ENCODE measurements at regions of chr19 and their contacts with region 1.

Region 1: DNA sequence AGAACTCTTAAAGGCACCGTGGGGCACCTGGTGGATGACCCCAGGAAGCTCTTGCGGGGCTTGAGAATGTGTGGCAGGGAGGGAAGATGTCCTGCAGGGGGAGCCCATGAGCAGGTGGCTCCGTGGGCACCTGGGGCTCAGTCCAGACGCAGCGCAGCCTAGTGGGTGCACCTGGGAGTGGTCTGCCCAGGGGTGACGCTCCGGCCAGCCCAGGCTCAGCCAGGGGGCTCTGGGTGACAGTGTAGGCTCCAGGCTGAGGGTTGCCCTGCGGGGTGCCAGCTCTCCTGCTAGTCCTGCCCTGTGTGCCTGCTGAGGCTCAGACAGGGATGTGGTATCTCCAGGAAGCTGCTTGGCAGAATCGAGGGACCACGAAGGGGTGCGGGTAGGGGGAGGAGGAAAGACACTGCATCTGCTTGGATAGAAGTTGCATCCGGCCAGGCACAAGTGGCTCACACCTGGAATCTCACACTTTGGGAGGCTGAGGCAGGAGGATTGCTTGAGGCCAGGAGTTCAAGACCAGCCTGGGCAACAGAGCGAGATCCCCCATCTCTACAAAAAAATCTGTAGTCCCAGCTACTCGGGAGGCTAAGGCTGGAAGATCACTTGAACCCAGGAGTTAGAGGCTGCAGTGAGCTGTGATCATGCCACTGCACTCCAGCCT is 15.0 kb upstream of the PGLS start:
- DNase-seq: peak; percentile 84 to 95
- H3K4me3 ChIP-seq: peak overlapping the region in 1 of 4 experiments; percentile 54; a peak in 1 of 8 replicates
- H3K27ac ChIP-seq: no peak overlapping the region
- H3K4me1 ChIP-seq: peaks cover 0 to 8% (median 4%) of the 10 kb centered on the region in 4 experiments; a peak in 3 of 7 replicates
- H3K27me3 ChIP-seq: no peaks in the 10 kb centered on the region
- CTCF ChIP-seq: peak; percentile 99 to 100 (median 100)
- EP300 ChIP-seq: no peak
- POLR2A ChIP-seq: no peak
- RAD21 ChIP-seq: peak; percentile 61 to 70

Region 2: GRCh38 chr19:17448131-17448967 is 48.1 kb before region 1 on chr19 and contains the start of gene TMEM221:
- CTCF ChIA-PET with region 1: interaction called, 13 read pairs
- POLR2A ChIA-PET with region 1: interaction called, 4 read pairs
- DNase-seq: peak in 1 of 2 experiments; percentile 89
- H3K4me3 ChIP-seq: peak within 1 kb of the TSS; percentile 40 to 94 (median 48)
- H3K27ac ChIP-seq: no peak within 1 kb of the TSS
- H3K4me1 ChIP-seq: peaks cover 0 to 2% (median under 1%) of the 10 kb centered on the region in 4 experiments; a peak in 1 of 7 replicates
- H3K27me3 ChIP-seq: peaks cover 0 to 16% (median 10%) of the 10 kb centered on the region in 4 experiments; a peak in 6 of 7 replicates
- CTCF ChIP-seq: peak; percentile 39 to 60 (median 54)
- EP300 ChIP-seq: no peak
- POLR2A ChIP-seq: peak in 1 of 2 experiments; percentile 57; a peak in 1 of 3 replicates
- RAD21 ChIP-seq: peak in 1 of 2 experiments; percentile 19; a peak in 1 of 4 replicates
- total RNA-seq, gene TMEM221: 1.4 and 1.6 TPM in 2 replicates

Region 3: DNA sequence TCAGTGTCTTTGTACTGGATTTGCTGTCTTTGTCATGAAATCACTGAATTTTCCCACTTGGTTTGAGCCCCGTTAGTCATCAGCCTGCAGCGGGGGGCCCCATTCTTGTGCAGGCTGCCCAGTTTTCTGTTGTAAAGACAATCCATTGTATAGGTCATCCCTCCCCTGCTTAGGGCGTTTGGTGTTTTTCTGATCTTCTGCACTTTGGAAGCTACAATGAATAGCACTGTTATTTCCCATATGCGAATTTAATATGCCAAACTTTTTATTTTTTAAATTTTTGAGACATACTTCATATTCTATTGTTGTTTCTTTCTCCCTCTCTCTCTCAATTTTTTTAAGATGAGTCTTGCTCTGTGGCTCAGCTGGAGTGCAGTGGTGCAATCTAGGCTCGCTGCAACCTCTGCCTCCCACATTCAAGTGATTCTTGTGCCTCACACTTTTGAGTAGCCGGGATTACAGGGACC is 17.1 kb before region 1 on chr19:
- CTCF ChIA-PET with region 1: interaction called, 13 read pairs
- POLR2A ChIA-PET with region 1: interaction called, 3 read pairs
- DNase-seq: no peak
- H3K4me3 ChIP-seq: no peak overlapping the region
- H3K27ac ChIP-seq: no peak overlapping the region
- H3K4me1 ChIP-seq: peaks cover 0 to 6% (median 0%) of the 10 kb centered on the region in 4 experiments; a peak in 4 of 7 replicates
- H3K27me3 ChIP-seq: no peaks in the 10 kb centered on the region
- CTCF ChIP-seq: no peak
- EP300 ChIP-seq: no peak
- POLR2A ChIP-seq: no peak
- RAD21 ChIP-seq: no peak

Region 4: DNA sequence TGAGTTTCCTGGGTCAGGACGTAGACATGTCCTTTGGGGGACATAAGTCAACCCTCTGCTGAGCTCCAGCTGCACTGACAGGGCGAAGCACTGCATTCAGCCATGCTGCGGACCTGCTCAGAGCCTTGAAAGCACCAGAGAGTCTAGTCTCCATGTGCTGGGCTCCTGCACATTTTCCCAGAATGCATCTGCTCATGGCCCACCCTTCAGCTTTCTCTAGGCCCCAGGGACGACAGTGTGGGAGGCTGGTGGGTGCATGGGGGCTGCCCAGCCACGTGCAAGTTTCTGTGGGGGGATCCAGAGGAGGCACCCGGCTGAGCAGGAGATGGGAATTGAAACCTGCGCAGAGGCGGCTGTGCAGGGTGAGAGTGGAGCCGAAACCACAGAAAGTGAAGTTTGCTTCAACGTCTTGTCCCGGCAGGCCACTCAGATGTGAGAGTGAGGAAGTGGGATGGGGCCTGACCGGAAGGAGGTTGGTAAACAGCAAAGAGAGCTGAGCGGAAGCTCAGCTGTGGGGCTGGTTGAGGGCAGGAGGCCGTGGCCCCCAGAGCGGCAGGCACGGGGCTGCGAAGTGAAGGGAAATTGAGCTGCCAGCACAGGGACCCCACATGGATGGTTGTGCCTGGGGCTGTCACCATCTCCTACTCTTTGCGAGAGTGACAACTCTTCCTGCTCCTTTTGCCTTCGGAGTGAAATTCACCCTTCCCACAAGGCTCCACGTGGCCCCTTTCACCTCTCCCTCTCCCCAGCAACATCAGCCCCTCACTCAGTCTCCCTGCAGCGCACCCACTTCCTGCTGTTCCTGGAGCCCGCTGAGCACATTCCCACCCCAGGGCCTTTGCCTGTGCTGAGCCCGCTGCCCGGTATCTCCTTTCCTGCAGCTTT is 26.8 kb after region 1 on chr19:
- CTCF ChIA-PET with region 1: interaction called, 15 read pairs
- POLR2A ChIA-PET with region 1: no interaction called
- DNase-seq: no peak
- H3K4me3 ChIP-seq: no peak overlapping the region
- H3K27ac ChIP-seq: no peak overlapping the region
- H3K4me1 ChIP-seq: no peaks in the 10 kb centered on the region; a peak in 1 of 7 replicates
- H3K27me3 ChIP-seq: no peaks in the 10 kb centered on the region
- CTCF ChIP-seq: no peak
- EP300 ChIP-seq: no peak
- POLR2A ChIP-seq: no peak
- RAD21 ChIP-seq: no peak

Region 5: GRCh38 chr19:17555929-17556813 is 59.7 kb after region 1 on chr19:
- CTCF ChIA-PET with region 1: interaction called, 16 read pairs
- POLR2A ChIA-PET with region 1: interaction called, 3 read pairs
- DNase-seq: peak in 1 of 2 experiments; percentile 67
- H3K4me3 ChIP-seq: peak overlapping the region; percentile 65 to 84 (median 66)
- H3K27ac ChIP-seq: no peak overlapping the region
- H3K4me1 ChIP-seq: peaks cover 0 to 7% (median 3%) of the 10 kb centered on the region in 4 experiments; a peak in 5 of 7 replicates
- H3K27me3 ChIP-seq: peaks cover 0 to 7% (median 2%) of the 10 kb centered on the region in 4 experiments; a peak in 2 of 7 replicates
- CTCF ChIP-seq: 0 out of 4 replicates have a peak, but pooled peaks of 1 of the 3 experiments have one; percentile 4
- EP300 ChIP-seq: no peak
- POLR2A ChIP-seq: no peak
- RAD21 ChIP-seq: peak in 1 of 2 experiments; percentile 27; a peak in 1 of 4 replicates

Region 6: GRCh38 chr19:17579661-17580244 is 83.3 kb after region 1 on chr19:
- CTCF ChIA-PET with region 1: interaction called, 38 read pairs
- POLR2A ChIA-PET with region 1: no interaction called
- DNase-seq: peak; percentile 87 to 95
- H3K4me3 ChIP-seq: peak overlapping the region; percentile 23 to 46 (median 36); a peak in 5 of 8 replicates
- H3K27ac ChIP-seq: 0 out of 2 replicates have a peak overlapping the region, but pooled peaks have one; percentile 13
- H3K4me1 ChIP-seq: peaks cover 0 to 18% (median 14%) of the 10 kb centered on the region in 4 experiments; a peak in 6 of 7 replicates
- H3K27me3 ChIP-seq: no peaks in the 10 kb centered on the region
- CTCF ChIP-seq: no peak
- EP300 ChIP-seq: no peak
- POLR2A ChIP-seq: no peak; a peak in 1 of 3 replicates
- RAD21 ChIP-seq: no peak